Activated B cell treated with CpG ODN at 0.5 μM for 24 hours (primary cell): ENCODE measurements at regions of chr6 and their contacts with region 1.

Region 1: DNA sequence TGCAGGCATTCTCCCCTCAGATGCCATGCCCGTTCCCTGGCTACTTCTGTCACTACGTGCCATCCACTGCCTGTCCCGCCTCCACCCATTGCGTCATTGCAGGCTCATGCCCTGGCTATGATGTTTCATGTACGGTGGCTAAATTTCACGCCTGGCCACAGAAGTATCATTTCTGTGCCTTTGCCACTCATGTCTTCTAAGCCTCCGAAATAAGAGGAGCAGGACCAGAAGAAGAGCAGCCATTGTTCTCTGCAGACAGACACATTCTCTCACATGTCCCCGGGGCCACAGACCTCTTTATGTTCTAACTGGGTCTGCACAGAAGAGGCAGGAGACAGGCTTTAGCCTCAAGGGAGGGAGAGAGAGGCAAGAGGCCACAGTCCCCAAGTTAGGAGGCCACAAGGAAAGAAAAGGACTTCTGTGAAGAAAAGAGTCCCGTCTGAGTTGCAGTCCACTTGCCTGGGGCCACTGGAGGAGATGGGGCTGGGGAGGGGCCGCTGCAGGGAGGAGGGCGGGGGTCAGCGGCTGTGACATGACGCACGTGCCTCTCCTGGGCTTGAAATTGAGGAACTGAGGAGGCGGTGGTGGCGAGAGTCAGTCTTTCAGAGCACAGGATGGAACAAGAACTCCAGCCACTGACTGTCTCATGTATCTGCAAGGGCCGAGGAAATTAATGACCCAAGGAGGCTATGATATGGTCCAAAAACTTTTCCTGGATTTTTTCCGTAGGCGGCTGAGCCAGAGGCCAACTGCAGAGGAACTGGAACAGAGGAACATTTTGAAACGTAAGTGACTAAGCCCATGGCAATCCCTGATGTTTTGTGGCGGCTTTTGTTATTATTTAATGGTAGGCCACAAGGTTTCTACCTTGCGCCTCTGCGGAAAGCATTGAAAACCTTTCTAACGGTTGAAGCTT is 55.9 kb downstream of the TBC1D7 start:
- DNase-seq: peak; percentile 70
- ATAC-seq: peak; percentile 74
- H3K4me3 Mint-ChIP-seq: peak overlapping the region; percentile 95
- H3K27ac Mint-ChIP-seq: peak overlapping the region; percentile 96
- H3K4me1 Mint-ChIP-seq: peaks cover 77% of the 10 kb centered on the region
- H3K27me3 Mint-ChIP-seq: no peaks in the 10 kb centered on the region
- CTCF ChIP-seq: no peak

Region 2: GRCh38 chr6:12698298-12698697 is 574.1 kb before region 1 on chr6:
- CTCF ChIA-PET with region 1: no interaction called
- POLR2A ChIA-PET with region 1: no interaction called
- intact Hi-C with region 1: no loop called
- DNase-seq: no peak
- ATAC-seq: no peak
- H3K4me3 Mint-ChIP-seq: no peak overlapping the region
- H3K27ac Mint-ChIP-seq: no peak overlapping the region
- H3K4me1 Mint-ChIP-seq: no peaks in the 10 kb centered on the region
- H3K27me3 Mint-ChIP-seq: peaks cover 21% of the 10 kb centered on the region
- CTCF ChIP-seq: no peak

Region 3: DNA sequence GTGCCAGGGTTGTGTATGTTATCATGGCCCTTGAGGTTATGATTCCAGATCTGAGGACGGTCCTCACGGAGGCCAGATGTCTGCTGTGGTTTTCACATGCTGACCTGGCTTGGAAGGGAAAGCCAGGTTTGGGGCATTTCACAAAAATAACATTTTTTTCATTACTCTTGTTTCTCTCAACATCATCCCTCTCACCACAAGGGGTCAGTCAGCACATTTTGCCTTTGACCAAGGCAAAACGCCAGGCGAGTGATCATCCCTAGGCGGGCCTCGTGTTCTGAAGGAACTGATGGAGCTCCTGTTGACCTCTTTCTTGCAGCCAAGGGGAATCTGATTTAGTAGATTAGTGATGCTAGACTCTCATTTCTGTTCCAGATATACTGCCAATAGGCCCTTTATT is 77.5 kb before region 1 on chr6:
- CTCF ChIA-PET with region 1: interaction called, 57 read pairs
- POLR2A ChIA-PET with region 1: interaction called, 18 read pairs
- intact Hi-C with region 1: loop called (anchors 1 kb)
- DNase-seq: peak; percentile 21
- ATAC-seq: peak; percentile 82
- H3K4me3 Mint-ChIP-seq: no peak overlapping the region
- H3K27ac Mint-ChIP-seq: no peak overlapping the region
- H3K4me1 Mint-ChIP-seq: peaks cover 11% of the 10 kb centered on the region
- H3K27me3 Mint-ChIP-seq: peaks cover 4% of the 10 kb centered on the region
- CTCF ChIP-seq: peak; percentile 55

Region 4: GRCh38 chr6:13261464-13261994 is 10.9 kb before region 1 on chr6:
- CTCF ChIA-PET with region 1: interaction called, 6 read pairs
- POLR2A ChIA-PET with region 1: interaction called, 101 read pairs
- intact Hi-C with region 1: loop called (anchors 1 kb)
- DNase-seq: peak; percentile 57
- ATAC-seq: peak; percentile 74
- H3K4me3 Mint-ChIP-seq: peak overlapping the region; percentile 74
- H3K27ac Mint-ChIP-seq: peak overlapping the region; percentile 75
- H3K4me1 Mint-ChIP-seq: peaks cover 92% of the 10 kb centered on the region
- H3K27me3 Mint-ChIP-seq: no peaks in the 10 kb centered on the region
- CTCF ChIP-seq: no peak

Region 5: DNA sequence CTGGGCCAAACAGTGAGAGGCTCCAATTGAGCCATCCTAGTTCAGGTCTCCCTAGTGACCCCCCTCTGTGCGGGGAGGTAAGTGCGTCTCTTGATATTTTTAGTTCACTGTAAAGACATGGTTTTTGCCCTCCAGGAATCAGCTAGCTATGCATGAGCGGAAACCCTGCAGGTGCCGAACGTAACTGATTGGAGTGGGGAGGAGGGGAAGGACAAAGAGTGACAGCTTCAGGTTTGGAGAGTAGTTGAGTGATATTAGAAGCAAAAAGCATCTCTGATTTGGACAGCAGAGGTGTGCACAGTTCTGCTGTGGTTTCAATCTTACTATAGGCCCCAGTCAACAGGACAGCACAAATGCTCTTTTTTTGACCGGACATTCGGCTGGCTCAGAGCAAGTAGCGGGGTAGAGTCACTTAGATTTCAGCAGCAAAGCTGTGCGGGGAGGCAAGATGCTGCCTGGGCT is 24.2 kb after region 1 on chr6:
- CTCF ChIA-PET with region 1: no interaction called
- POLR2A ChIA-PET with region 1: interaction called, 67 read pairs
- intact Hi-C with region 1: loop called (anchors 1 kb)
- DNase-seq: no peak
- ATAC-seq: peak; percentile 11
- H3K4me3 Mint-ChIP-seq: peak overlapping the region; percentile 48
- H3K27ac Mint-ChIP-seq: peak overlapping the region; percentile 74
- H3K4me1 Mint-ChIP-seq: peaks cover 71% of the 10 kb centered on the region
- H3K27me3 Mint-ChIP-seq: no peaks in the 10 kb centered on the region
- CTCF ChIP-seq: no peak

Region 6: DNA sequence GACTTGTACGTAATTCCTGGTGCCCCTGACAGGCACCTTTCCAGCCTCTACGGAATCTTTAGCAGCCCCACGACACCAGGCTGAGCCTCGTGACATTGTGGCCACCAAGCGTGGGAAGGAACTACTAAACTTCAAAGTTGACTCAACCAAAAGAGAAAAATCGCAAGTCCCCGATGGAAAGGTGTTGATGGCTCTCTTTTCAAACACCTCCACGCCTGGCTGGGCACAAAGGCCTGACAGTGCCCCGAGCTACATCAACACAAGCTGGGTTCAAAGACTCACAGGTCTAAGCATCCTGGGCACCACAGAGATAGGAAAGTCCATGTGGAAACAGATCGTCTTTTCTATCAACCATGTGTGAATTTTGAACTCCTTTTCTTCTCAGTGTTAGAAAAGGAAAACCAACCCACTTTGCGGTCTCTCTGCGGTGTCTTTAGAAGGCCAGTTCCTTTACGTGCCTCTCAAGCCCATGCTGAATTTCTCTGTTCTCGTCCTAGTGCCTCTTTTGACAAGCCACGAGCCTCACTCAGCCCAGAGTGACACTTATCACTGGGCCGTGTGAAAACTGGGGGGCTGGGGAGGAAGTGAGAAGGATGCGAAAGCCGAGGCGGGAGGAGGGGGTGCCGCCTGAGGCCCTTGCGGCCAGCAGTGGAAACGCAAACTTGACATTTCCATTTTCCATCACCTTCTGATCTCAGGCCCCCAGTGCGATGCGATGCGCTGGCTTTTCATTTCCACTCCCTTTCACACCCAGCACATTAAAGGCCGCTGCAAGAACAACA is 155.6 kb after region 1 on chr6:
- CTCF ChIA-PET with region 1: no interaction called
- POLR2A ChIA-PET with region 1: no interaction called
- intact Hi-C with region 1: loop called (anchors 5 kb)
- DNase-seq: peak; percentile 58
- ATAC-seq: peak; percentile 86
- H3K4me3 Mint-ChIP-seq: peak overlapping the region; percentile 80
- H3K27ac Mint-ChIP-seq: peak overlapping the region; percentile 95
- H3K4me1 Mint-ChIP-seq: peaks cover 68% of the 10 kb centered on the region
- H3K27me3 Mint-ChIP-seq: no peaks in the 10 kb centered on the region
- CTCF ChIP-seq: no peak

Region 7: GRCh38 chr6:14095437-14095836 is 823.0 kb after region 1 on chr6:
- CTCF ChIA-PET with region 1: no interaction called
- POLR2A ChIA-PET with region 1: no interaction called
- intact Hi-C with region 1: loop called (anchors 10 kb)
- DNase-seq: peak; percentile 72
- ATAC-seq: peak; percentile 73
- H3K4me3 Mint-ChIP-seq: peak overlapping the region; percentile 85
- H3K27ac Mint-ChIP-seq: peak overlapping the region; percentile 100
- H3K4me1 Mint-ChIP-seq: peaks cover 96% of the 10 kb centered on the region
- H3K27me3 Mint-ChIP-seq: no peaks in the 10 kb centered on the region
- CTCF ChIP-seq: no peak